Ovary (tissue), 10 donors: ENCODE measurements at regions of chr19 and their contacts with region 1.

Region 1: DNA sequence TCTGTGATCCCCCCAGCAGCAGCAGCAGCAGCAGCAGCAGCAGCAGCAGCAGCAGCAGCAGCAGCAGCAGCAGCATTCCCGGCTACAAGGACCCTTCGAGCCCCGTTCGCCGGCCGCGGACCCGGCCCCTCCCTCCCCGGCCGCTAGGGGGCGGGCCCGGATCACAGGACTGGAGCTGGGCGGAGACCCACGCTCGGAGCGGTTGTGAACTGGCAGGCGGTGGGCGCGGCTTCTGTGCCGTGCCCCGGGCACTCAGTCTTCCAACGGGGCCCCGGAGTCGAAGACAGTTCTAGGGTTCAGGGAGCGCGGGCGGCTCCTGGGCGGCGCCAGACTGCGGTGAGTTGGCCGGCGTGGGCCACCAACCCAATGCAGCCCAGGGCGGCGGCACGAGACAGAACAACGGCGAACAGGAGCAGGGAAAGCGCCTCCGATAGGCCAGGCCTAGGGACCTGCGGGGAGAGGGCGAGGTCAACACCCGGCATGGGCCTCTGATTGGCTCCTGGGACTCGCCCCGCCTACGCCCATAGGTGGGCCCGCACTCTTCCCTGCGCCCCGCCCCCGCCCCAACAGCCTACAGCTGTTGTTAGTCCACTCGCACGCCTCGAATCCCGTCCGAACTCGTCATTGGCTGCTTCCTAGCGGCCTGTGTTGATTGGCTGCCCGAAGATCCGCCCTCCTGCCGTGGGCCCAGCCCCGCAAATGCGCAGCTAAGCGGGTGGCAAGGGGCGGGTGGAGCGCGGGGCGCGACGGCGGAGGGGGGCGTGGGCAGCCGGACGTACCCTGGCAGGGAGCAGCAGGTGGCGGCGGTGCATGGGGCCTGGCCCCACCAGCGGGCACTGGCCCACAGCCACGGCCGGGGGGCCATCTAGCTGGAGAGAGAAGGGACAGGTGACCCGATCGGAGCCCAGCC is 1.4 kb upstream of the SIX5 start:
- DNase-seq: peak; percentile 95 to 98 (median 97)
- H3K4me3 ChIP-seq: peak overlapping the region; percentile 60
- H3K27ac ChIP-seq: peak overlapping the region; percentile 92 to 94
- H3K4me1 ChIP-seq: peaks cover 14% of the 10 kb centered on the region
- H3K27me3 ChIP-seq: no peaks in the 10 kb centered on the region
- CTCF ChIP-seq: peak; percentile 96 to 99 (median 96)
- EP300 ChIP-seq: peak; percentile 66
- POLR2A ChIP-seq: peak; percentile 20

Region 2: GRCh38 chr19:45653634-45654033 is 116.8 kb before region 1 on chr19:
- intact Hi-C with region 1: no loop called
- DNase-seq: no peak
- H3K4me3 ChIP-seq: no peak overlapping the region
- H3K27ac ChIP-seq: no peak overlapping the region
- H3K4me1 ChIP-seq: no peaks in the 10 kb centered on the region
- H3K27me3 ChIP-seq: no peaks in the 10 kb centered on the region
- CTCF ChIP-seq: no peak
- EP300 ChIP-seq: no peak
- POLR2A ChIP-seq: no peak

Region 3: GRCh38 chr19:45692187-45693105 is 78.0 kb before region 1 on chr19 and contains the start of gene QPCTL:
- intact Hi-C with region 1: loop called in 2 of 4 experiments (anchors 5 kb)
- DNase-seq: peak; percentile 90 to 95 (median 93)
- H3K4me3 ChIP-seq: peak within 1 kb of the TSS; percentile 57
- H3K27ac ChIP-seq: peak within 1 kb of the TSS; percentile 7 to 88
- H3K4me1 ChIP-seq: peaks cover 3% of the 10 kb centered on the region
- H3K27me3 ChIP-seq: no peaks in the 10 kb centered on the region
- CTCF ChIP-seq: no peak
- EP300 ChIP-seq: no peak
- POLR2A ChIP-seq: no peak
- total RNA-seq, gene QPCTL: 4.2 to 15.3 (median 7.3) TPM

Region 4: GRCh38 chr19:45717166-45717982 is 53.1 kb before region 1 on chr19:
- intact Hi-C with region 1: loop called in 2 of 4 experiments (anchors 5 to 10 kb)
- DNase-seq: peak; percentile 99
- H3K4me3 ChIP-seq: peak overlapping the region; percentile 52
- H3K27ac ChIP-seq: peak overlapping the region; percentile 66 to 74
- H3K4me1 ChIP-seq: peaks cover 5% of the 10 kb centered on the region
- H3K27me3 ChIP-seq: no peaks in the 10 kb centered on the region
- CTCF ChIP-seq: peak in 2 of 3 donors; percentile 28 to 50
- EP300 ChIP-seq: peak; percentile 82
- POLR2A ChIP-seq: peak; percentile 61

Region 5: GRCh38 chr19:45730389-45731288 is 39.8 kb before region 1 on chr19 and contains the start of gene FBXO46:
- intact Hi-C with region 1: loop called in 1 of 4 experiments (anchors 2 kb)
- DNase-seq: peak; percentile 95 to 97 (median 96)
- H3K4me3 ChIP-seq: peak within 1 kb of the TSS; percentile 95
- H3K27ac ChIP-seq: peak within 1 kb of the TSS in 1 of 2 donors; percentile 72
- H3K4me1 ChIP-seq: peaks cover 5% of the 10 kb centered on the region
- H3K27me3 ChIP-seq: no peaks in the 10 kb centered on the region
- CTCF ChIP-seq: no peak
- EP300 ChIP-seq: no peak
- POLR2A ChIP-seq: peak; percentile 45
- total RNA-seq, gene FBXO46: 13.4 to 32.5 (median 22.4) TPM

Region 6: GRCh38 chr19:45798995-45799517 is 28.6 kb after region 1 on chr19:
- intact Hi-C with region 1: loop called in 2 of 4 experiments (anchors 2 kb)
- DNase-seq: peak; percentile 65 to 85 (median 80)
- H3K4me3 ChIP-seq: no peak overlapping the region
- H3K27ac ChIP-seq: no peak overlapping the region
- H3K4me1 ChIP-seq: no peaks in the 10 kb centered on the region
- H3K27me3 ChIP-seq: no peaks in the 10 kb centered on the region
- CTCF ChIP-seq: peak; percentile 70 to 92 (median 87)
- EP300 ChIP-seq: no peak
- POLR2A ChIP-seq: no peak